GM10248 (cell line): ENCODE measurements at regions of chr3 and their contacts with region 1.

Region 1: GRCh38 chr3:48694610-48695392 is 9.1 kb upstream of the NCKIPSD start:
- DNase-seq: no peak
- CTCF ChIP-seq: no peak

Region 2: DNA sequence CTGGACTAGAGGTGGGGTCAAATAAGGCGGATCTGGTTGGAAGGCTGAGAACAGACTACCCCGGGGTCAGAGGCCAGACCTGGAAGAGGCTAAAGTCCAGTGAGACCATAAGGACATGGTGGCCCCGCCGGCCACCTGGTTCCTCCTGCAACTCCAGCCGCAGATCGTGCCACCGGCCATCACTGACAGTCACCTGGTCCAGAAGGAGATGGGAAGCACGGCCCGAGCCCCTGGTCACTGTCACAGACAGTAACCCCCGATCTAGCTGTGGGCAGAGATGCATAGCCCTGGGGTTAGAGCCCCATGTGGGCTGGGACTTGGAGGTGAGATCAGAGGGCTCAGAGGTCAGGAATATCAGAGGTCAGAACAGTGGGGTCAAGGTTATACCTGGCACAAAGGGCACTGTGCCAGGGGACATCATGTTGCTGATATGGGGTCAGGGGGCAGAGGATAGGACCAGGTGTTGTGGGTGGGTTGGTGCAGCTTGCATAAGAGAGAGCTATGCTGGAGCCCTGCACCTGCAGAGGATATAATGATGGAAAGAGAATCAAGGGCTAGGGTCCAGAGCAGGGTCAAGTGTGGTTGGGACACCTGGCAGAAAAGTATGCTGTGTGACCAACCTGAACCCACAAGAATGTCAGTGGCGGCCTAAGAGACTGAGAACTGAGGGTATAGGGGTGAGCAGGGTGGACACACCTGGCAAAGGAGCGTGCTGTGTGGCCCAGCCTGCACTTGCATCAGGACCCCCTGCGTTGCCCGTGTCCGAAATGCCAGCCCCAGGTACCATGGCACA is 41.7 kb before region 1 on chr3:
- CTCF ChIA-PET with region 1: no interaction called
- POLR2A ChIA-PET with region 1: no interaction called
- DNase-seq: no peak
- CTCF ChIP-seq: no peak

Region 3: DNA sequence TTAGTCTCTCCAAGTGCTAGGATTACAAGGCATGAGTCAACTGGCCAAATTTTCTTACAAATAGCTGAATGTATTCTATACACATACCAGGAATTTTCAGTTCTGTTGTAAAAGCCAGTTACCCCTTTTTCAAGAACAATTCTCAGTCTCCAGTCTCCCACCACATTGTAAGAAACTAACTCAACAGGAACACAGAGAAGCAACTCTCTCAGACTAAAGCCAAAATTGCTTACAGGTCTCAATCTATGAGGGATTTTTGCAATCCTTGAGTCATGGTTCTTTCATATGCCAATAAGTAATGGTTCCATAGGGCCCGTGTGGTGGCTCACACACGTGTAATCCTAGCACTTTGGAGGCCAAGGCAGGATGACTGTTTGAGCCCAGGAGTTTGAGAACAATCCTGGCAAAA is 13.7 kb after region 1 on chr3:
- CTCF ChIA-PET with region 1: interaction called, 16 read pairs
- POLR2A ChIA-PET with region 1: interaction called, 3 read pairs
- DNase-seq: no peak
- CTCF ChIP-seq: no peak